Activated CD4-positive, alpha-beta T cell treated with anti-CD3 and anti-CD28 coated beads for 36 hours (primary cell): ENCODE measurements at regions of chr16 and their contacts with region 1.

Region 1: GRCh38 chr16:51151961-51152663 is 1.0 kb upstream of the SALL1 start:
- DNase-seq: no peak
- ATAC-seq: no peak
- H3K4me3 Mint-ChIP-seq: no peak overlapping the region
- H3K27ac Mint-ChIP-seq: no peak overlapping the region
- H3K4me1 Mint-ChIP-seq: peaks cover 12% of the 10 kb centered on the region
- H3K27me3 Mint-ChIP-seq: peaks cover 66% of the 10 kb centered on the region

Region 2: GRCh38 chr16:49168126-49168525 is 1984.0 kb before region 1 on chr16:
- CTCF ChIA-PET with region 1: no interaction called
- POLR2A ChIA-PET with region 1: no interaction called
- intact Hi-C with region 1: no loop called
- DNase-seq: no peak
- ATAC-seq: no peak
- H3K4me3 Mint-ChIP-seq: no peak overlapping the region
- H3K27ac Mint-ChIP-seq: no peak overlapping the region
- H3K4me1 Mint-ChIP-seq: no peaks in the 10 kb centered on the region
- H3K27me3 Mint-ChIP-seq: no peaks in the 10 kb centered on the region

Region 3: DNA sequence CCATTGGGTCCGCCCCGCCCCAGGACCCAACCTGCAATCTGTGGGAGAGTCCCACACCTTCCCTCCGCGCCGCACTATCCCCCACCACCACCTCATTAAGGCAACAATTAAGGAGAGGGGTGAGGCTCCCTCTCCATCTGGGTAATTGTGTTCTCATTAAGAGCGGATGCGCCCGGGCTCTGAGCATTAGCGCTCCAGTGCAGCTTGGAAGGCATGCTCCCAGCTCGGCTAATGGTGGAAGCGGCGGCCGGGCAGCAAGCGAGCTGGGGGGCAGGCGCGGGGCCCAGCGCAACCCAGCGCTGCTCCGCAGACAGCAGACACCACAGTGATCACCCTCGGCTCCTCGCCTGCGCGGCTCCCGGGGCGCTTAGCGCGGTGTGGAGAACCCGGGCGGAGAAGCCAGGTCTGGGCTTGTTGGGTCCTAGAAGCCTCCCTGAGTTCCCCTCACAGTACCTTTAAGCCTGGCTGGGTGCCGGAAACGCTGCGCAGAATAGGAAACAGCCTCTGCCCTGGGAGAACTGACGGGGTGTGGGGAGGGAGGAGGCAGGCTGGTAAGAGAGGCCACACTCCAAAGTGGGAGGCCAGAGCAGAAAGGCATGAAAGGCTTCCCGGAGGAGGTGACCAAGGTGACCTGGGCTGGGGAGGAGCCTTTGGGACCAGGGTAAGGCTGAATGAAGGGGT is 1876.9 kb before region 1 on chr16:
- CTCF ChIA-PET with region 1: no interaction called
- POLR2A ChIA-PET with region 1: no interaction called
- intact Hi-C with region 1: loop called in 1 of 2 experiments (anchors 5 kb)
- DNase-seq: no peak
- ATAC-seq: no peak
- H3K4me3 Mint-ChIP-seq: no peak overlapping the region
- H3K27ac Mint-ChIP-seq: no peak overlapping the region
- H3K4me1 Mint-ChIP-seq: peaks cover 5% of the 10 kb centered on the region
- H3K27me3 Mint-ChIP-seq: peaks cover 58% of the 10 kb centered on the region